Sigmoid colon (tissue), 7 donors: ENCODE measurements at regions of chr1 and their contacts with region 1.

Region 1: DNA sequence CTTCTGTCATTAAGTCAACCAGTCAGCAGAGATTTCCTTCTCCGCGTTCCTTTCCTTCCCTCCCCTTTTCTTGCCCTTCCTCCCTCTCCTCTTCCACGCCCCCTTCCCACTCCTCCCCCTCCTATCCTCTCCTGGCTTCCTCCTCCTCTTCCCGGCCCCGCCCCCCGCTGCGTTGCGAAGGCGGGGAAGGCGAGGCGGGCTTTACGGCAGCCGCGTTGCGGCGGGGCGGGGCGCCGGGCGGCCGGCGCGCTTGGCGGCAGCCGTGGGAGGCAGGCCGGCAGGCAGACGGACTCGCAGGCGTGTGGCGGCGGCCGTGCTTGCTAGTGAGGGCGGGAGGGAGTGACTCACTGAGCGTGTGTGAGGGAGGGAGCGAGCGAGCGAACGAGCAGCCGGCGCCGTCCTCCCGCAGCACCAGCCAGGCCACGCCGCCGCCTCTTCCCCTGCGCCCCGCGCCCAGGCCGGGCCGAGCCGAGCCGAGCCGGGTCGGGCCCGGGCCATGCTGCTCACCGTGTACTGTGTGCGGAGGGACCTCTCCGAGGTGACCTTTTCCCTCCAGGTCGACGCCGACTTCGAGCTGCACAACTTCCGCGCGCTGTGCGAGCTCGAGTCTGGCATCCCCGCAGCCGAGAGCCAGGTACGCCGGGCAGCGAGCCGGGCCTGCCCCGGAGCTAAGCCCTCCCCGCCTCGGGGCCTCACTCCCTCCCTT is at the start of gene DDI2:
- DNase-seq: peak; percentile 98
- H3K4me3 ChIP-seq: peak within 1 kb of the TSS; percentile 63 to 99 (median 88)
- H3K27ac ChIP-seq: peak within 1 kb of the TSS; percentile 94 to 99 (median 96)
- H3K4me1 ChIP-seq: peaks cover 0 to 48% (median 39%) of the 10 kb centered on the region in 4 donors
- H3K27me3 ChIP-seq: no peaks in the 10 kb centered on the region
- CTCF ChIP-seq: no peak
- EP300 ChIP-seq: peak in 1 of 4 donors; percentile 23
- POLR2A ChIP-seq: peak in 1 of 2 donors; percentile 5
- total RNA-seq, gene DDI2: 13.4 to 27.3 (median 19.8) TPM

Region 2: GRCh38 chr1:15526490-15527339 is 90.6 kb before region 1 on chr1 and contains the start of gene DNAJC16:
- intact Hi-C with region 1: loop called (anchors 5 kb)
- DNase-seq: peak; percentile 100
- H3K4me3 ChIP-seq: peak within 1 kb of the TSS; percentile 93 to 99 (median 98)
- H3K27ac ChIP-seq: peak within 1 kb of the TSS; percentile 97 to 100 (median 98)
- H3K4me1 ChIP-seq: peaks cover 0 to 41% (median 33%) of the 10 kb centered on the region in 4 donors
- H3K27me3 ChIP-seq: no peaks in the 10 kb centered on the region
- CTCF ChIP-seq: peak in 1 of 4 experiments; percentile 16
- EP300 ChIP-seq: peak in 2 of 4 donors; percentile 18 to 98
- POLR2A ChIP-seq: peak; percentile 67 to 74
- total RNA-seq, gene DNAJC16: 11.4 to 20.5 (median 16.8) TPM

Region 3: DNA sequence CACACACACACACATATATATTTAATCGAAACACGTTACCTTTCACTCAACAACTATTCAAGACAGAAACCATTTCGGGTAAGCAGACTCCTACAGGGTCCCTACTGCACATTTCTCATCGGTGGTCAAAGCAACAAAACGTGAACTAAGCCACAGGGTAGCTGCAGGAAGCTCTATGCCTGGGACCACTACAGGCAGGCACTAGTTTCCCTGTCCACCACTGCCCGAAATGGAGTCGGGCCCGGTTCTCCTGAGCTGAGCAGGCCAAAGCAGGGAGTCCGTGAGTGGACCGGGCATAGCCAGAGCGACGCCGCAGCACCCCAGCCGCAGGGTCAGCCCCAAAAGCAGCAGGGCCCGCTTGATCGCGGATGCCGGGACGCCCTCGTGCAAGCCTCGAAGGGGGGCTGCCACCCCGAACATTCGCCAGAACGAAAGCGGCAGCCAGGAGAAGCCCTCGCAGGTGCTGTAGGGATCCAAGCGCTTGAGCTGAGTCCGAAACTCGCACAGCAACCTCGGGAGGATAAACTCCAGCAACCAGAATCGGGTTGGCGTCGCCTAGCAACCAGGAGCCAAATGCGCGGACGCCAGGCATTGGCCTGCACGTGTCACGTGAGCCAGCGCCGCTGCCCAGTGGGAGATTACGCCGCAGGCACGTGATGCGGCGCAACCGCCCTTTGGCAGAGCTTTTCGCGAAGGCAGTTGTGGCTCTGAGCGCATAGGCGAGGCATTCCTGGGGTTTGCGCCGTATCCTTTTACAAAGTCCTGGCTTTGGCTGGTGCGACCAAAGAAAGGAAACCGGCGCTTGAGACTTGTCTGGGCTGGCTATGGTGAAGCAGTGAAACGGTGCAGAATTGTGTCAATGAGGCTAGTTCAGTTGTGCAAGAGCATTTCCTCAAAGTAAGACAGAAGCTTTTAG is 14.0 kb before region 1 on chr1:
- intact Hi-C with region 1: loop called (anchors 2 kb)
- DNase-seq: peak; percentile 99
- H3K4me3 ChIP-seq: peak overlapping the region; percentile 63 to 83 (median 76)
- H3K27ac ChIP-seq: peak overlapping the region; percentile 86 to 91 (median 88)
- H3K4me1 ChIP-seq: peaks cover 0 to 22% (median 16%) of the 10 kb centered on the region in 4 donors
- H3K27me3 ChIP-seq: no peaks in the 10 kb centered on the region
- CTCF ChIP-seq: no peak
- EP300 ChIP-seq: no peak
- POLR2A ChIP-seq: peak; percentile 36 to 38

Region 4: DNA sequence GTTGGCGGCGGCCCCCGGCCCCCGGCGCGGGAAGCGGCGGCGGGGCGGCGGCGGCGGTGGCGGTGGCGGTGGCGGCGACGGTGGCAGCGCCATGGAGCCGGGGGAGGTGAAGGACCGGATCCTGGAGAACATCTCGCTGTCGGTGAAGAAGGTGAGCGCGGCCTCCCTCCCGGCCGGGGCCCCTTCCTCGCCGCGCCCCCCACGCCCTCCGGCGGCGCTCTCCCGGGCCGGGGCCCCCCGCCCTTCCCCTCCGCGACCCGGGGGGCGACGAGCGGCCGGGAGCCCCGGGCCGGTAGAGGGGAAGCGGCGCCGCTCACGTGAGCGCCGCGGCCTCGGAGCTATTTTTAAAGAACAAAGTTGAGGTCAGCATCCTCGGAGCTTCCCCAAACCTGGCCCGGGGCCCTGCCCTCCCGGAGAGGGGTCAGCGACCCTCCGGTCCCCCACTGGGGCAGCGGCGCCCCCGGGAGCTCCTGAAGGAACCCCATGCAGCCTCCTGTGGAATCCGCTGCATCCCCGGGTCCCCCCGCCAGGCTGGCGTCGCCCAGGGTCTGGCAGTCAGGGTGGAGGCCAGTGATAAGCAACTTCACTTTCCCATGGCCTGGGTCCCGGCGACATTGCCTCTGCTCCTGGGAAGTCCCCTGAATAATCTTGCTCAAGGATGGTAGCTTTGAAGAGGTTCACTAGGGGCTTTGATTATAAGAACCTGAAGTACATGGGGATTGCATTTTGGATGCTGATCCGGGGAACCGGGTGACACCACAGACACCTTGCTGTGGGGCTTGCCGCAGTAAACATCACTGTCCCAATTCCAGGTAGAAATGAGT is 67.4 kb after region 1 on chr1:
- intact Hi-C with region 1: loop called (anchors 5 kb)
- DNase-seq: peak; percentile 77
- H3K4me3 ChIP-seq: peak overlapping the region; percentile 66 to 97 (median 82)
- H3K27ac ChIP-seq: peak overlapping the region; percentile 87 to 97 (median 92)
- H3K4me1 ChIP-seq: peaks cover 0 to 22% (median 16%) of the 10 kb centered on the region in 4 donors
- H3K27me3 ChIP-seq: no peaks in the 10 kb centered on the region
- CTCF ChIP-seq: peak in 3 of 4 experiments; percentile 8 to 18 (median 11)
- EP300 ChIP-seq: no peak
- POLR2A ChIP-seq: no peak

Region 5: DNA sequence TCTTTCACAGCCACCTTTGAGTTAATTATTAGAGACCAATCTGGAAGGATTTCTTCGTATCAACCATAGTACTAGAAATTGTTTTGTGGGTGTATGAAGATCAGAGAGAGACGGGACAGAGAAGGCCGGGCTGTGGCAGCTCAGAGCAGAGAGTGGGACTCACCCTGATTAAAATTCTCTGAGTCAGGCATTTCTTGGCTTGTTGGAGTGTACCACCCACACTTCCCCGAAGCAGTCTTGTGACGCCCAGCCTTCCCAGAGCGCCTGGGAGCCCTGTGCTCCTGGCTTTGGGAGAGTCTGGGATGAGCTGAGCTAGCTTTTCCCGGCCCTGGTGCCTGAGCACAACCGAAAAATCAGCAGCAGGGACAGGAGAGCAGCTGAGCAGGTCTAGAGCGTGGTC is 86.2 kb after region 1 on chr1:
- intact Hi-C with region 1: loop called (anchors 5 kb)
- DNase-seq: peak; percentile 94
- H3K4me3 ChIP-seq: peak overlapping the region in 2 of 4 donors; percentile 4 to 21
- H3K27ac ChIP-seq: peak overlapping the region; percentile 86 to 90 (median 89)
- H3K4me1 ChIP-seq: peaks cover 0 to 63% (median 59%) of the 10 kb centered on the region in 4 donors
- H3K27me3 ChIP-seq: no peaks in the 10 kb centered on the region
- CTCF ChIP-seq: no peak
- EP300 ChIP-seq: peak in 2 of 4 donors; percentile 44 to 74
- POLR2A ChIP-seq: no peak

Region 6: GRCh38 chr1:15847100-15847892 is 230.0 kb after region 1 on chr1 and contains the start of gene SPEN:
- intact Hi-C with region 1: loop called (anchors 2 kb)
- DNase-seq: peak; percentile 99
- H3K4me3 ChIP-seq: peak within 1 kb of the TSS; percentile 78 to 95 (median 83)
- H3K27ac ChIP-seq: peak within 1 kb of the TSS; percentile 92 to 99 (median 96)
- H3K4me1 ChIP-seq: peaks cover 0 to 46% (median 39%) of the 10 kb centered on the region in 4 donors
- H3K27me3 ChIP-seq: no peaks in the 10 kb centered on the region
- CTCF ChIP-seq: peak in 2 of 4 experiments; percentile 11 to 26
- EP300 ChIP-seq: no peak
- POLR2A ChIP-seq: peak; percentile 87 to 88
- total RNA-seq, gene SPEN: 20.4 to 38.5 (median 22.6) TPM